Activated naive CD8-positive, alpha-beta T cell treated with anti-CD3 and anti-CD28 coated beads, Interleukin-2, amount 10 ng/mL, durations not matched to agents 7 days and 5 days (primary cell): ENCODE measurements at regions of chr12 and their contacts with region 1.

Region 1: GRCh38 chr12:6851921-6852650 is at the start of gene USP5:
- DNase-seq: peak; percentile 94
- ATAC-seq: peak; percentile 79
- H3K4me3 Mint-ChIP-seq: peak within 1 kb of the TSS; percentile 96
- H3K27ac Mint-ChIP-seq: peak within 1 kb of the TSS; percentile 99
- H3K4me1 Mint-ChIP-seq: peaks cover 37% of the 10 kb centered on the region
- H3K27me3 Mint-ChIP-seq: no peaks in the 10 kb centered on the region
- total RNA-seq, gene USP5: 84.8 to 95.4 TPM

Region 2: GRCh38 chr12:6688999-6689882 is 162.8 kb before region 1 on chr12 and contains the start of gene ZNF384:
- POLR2A ChIA-PET with region 1: interaction called, 27 read pairs
- DNase-seq: peak; percentile 88
- ATAC-seq: peak; percentile 81
- H3K4me3 Mint-ChIP-seq: peak within 1 kb of the TSS; percentile 90
- H3K27ac Mint-ChIP-seq: peak within 1 kb of the TSS; percentile 95
- H3K4me1 Mint-ChIP-seq: peaks cover 37% of the 10 kb centered on the region
- H3K27me3 Mint-ChIP-seq: no peaks in the 10 kb centered on the region
- total RNA-seq, gene ZNF384: 79.5 to 88.2 TPM

Region 3: DNA sequence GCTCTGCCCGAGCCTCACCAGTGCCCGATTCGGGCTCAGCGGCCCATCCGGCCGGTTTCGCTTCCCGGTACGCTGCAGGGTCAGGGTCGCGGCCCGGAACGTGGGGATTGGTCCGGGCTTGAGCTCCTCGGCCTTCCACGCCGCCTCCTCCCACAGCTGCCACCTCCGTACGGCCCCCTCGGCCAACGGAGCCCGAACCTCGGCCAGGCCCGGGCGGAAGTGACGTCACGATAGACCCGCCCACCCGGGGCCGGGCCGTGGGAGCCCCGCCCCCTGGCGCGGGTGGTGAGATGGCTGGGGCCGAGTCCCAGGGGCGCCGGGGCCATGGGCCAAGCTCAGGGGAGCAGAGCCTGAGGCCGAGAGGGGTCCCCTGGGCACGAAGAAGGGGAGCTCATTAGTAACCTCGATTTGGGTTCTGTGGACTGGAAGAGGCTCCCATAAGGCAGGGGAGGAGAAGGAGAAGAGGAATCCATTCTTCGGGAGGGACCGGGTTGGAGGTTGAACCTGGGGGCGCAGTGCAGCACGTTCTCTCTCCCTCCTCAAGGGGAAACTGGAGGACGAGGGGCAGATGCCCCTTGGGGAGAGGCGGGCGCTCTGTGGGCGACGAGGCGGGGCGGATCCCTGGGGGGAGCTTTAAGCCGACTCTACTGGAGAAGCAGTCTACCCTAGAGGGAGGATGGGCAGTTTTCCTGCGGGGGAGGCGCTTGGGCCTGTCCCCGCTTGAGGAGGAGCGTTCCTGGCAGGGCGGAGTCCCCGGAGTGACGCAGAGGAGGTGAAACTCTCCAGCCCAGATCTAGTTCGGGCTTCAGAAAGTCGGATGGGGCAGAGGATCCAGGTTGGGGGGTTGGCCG is 98.9 kb before region 1 on chr12 and contains the start of gene MLF2:
- POLR2A ChIA-PET with region 1: interaction called, 23 read pairs
- DNase-seq: peak; percentile 99
- ATAC-seq: peak; percentile 96
- H3K4me3 Mint-ChIP-seq: peak within 1 kb of the TSS; percentile 95
- H3K27ac Mint-ChIP-seq: peak within 1 kb of the TSS; percentile 98
- H3K4me1 Mint-ChIP-seq: peaks cover 26% of the 10 kb centered on the region
- H3K27me3 Mint-ChIP-seq: peaks cover 9% of the 10 kb centered on the region
- total RNA-seq, gene MLF2: 108 to 118 TPM

Region 4: DNA sequence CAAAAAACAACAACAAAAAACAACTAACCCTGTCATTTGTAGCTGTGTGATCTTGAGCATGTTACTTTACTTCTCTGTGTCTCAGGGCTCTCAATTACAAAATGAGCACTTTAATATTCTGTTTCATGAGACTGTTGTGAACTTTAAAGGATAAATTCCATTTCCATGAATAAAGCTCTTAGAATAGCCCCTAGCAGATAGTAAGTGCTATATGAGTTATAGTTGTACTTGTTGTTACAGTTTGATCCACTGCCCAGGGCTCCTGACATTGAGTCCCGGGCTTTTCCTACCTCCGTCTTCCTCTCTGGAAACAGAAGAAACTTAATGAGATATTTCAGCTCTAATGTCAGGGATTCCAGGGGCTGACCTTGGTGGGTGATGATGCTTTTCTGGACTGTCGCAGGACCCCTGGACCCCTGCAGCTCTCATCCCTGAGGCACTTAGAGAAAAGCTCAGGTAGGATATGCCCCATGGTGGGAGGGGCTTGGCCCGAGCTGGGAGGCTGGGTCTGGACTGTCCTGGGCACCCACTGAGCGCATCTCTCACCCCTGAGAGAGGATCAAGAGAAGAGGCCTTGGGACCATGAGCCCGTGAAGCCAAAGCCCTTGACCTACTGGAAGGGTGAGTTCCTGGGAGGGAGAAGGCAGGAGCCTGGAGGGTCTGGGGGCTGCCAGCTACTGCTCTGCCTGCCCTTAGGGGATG is 18.7 kb before region 1 on chr12:
- POLR2A ChIA-PET with region 1: interaction called, 14 read pairs
- DNase-seq: no peak
- ATAC-seq: no peak
- H3K4me3 Mint-ChIP-seq: no peak overlapping the region
- H3K27ac Mint-ChIP-seq: no peak overlapping the region
- H3K4me1 Mint-ChIP-seq: peaks cover 12% of the 10 kb centered on the region
- H3K27me3 Mint-ChIP-seq: peaks cover 29% of the 10 kb centered on the region

Region 5: DNA sequence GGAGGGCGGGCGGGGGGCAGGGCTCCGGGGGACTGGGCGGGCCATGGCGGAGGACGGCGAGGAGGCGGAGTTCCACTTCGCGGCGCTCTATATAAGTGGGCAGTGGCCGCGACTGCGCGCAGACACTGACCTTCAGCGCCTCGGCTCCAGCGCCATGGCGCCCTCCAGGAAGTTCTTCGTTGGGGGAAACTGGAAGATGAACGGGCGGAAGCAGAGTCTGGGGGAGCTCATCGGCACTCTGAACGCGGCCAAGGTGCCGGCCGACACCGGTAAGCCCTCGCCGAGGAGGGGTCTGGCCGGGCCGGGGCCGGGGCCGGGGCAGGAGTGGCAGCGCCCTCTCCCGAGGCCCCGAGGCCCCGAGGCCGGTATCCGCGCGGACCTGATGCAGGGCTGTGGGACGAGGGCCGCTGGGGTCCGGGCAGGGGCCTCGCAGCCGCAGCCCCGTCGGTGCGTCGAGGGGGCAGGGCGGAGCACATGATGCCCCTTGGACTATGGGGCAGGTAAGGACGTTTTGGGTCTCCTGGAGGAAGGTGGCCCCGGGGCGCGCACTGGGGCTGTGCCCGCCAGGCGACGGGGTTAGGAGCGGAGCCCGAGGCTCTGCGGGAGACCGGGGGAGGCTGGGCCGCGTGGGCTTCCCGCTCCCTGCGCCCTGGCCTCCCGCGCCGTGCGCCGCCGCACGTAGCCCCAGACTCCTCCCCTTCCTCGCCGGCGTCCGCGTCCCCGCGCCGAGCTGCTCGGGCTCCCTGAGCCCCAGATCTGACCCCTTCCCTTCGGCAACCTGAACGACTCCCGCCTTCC is 15.5 kb after region 1 on chr12 and contains the start of gene TPI1:
- POLR2A ChIA-PET with region 1: interaction called, 106 read pairs
- DNase-seq: peak; percentile 85
- ATAC-seq: peak; percentile 65
- H3K4me3 Mint-ChIP-seq: peak within 1 kb of the TSS; percentile 95
- H3K27ac Mint-ChIP-seq: peak within 1 kb of the TSS; percentile 96
- H3K4me1 Mint-ChIP-seq: peaks cover 39% of the 10 kb centered on the region
- H3K27me3 Mint-ChIP-seq: no peaks in the 10 kb centered on the region
- total RNA-seq, gene TPI1: 1,129 to 1,200 TPM

Region 6: DNA sequence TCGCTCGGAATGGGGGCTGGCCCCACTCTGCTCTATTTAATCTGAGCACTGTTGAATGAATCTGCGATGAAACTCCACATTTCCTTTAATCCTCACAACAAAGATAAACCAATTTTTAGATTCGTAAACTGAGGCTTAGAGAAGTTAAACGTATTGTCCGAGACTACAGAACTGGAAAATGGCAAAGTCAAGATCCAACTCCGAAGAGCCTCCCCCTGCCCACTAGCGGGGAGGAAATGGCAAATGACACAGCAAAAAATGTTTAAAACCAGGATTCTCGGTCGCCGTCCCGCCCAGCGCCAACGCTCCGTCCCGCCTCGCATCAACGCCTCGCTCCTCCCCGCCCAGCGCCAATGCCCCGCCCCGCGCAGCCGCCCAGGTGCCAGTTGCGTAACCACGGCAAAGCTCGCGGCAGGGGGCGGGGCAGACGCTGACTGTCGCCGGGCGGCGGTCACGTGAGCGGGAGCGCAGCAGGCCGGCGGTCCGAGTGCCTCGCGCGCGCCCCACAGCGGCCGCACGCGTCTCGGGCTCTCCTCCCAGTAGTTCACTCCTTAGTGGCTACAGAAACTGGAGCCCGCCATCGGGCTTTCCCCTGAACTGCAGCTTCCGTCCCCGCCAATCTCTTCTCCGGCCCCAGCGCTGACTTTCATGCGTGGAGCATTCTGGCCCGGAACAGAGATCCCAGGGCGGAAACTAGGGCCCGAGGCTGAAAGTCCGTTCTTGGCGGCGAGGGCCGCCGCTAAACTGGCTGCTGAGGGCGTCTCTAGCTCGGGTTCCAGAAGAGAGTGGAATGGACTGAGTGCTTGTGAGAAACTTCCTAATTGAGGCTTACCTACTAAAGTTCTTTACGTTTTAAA is 38.9 kb after region 1 on chr12:
- POLR2A ChIA-PET with region 1: interaction called, 25 read pairs
- DNase-seq: peak; percentile 100
- ATAC-seq: peak; percentile 97
- H3K4me3 Mint-ChIP-seq: peak overlapping the region; percentile 88
- H3K27ac Mint-ChIP-seq: peak overlapping the region; percentile 91
- H3K4me1 Mint-ChIP-seq: peaks cover 17% of the 10 kb centered on the region
- H3K27me3 Mint-ChIP-seq: no peaks in the 10 kb centered on the region

Region 7: GRCh38 chr12:6944381-6945186 is 92.5 kb after region 1 on chr12:
- POLR2A ChIA-PET with region 1: interaction called, 11 read pairs
- DNase-seq: peak; percentile 87
- ATAC-seq: peak; percentile 44
- H3K4me3 Mint-ChIP-seq: peak overlapping the region; percentile 97
- H3K27ac Mint-ChIP-seq: peak overlapping the region; percentile 94
- H3K4me1 Mint-ChIP-seq: peaks cover 48% of the 10 kb centered on the region
- H3K27me3 Mint-ChIP-seq: no peaks in the 10 kb centered on the region